ENCODE measurements at regions of chr6 and their contacts with region 1.

Region 1: GRCh38 chr6:16591396-16592222 is 169.7 kb downstream of the ATXN1 start:
- DNase-seq: peak; percentile 72
- H3K4me3 Mint-ChIP-seq: peak overlapping the region; percentile 39
- H3K27ac Mint-ChIP-seq: peak overlapping the region; percentile 78
- H3K4me1 Mint-ChIP-seq: peaks cover 43% of the 10 kb centered on the region
- H3K27me3 Mint-ChIP-seq: no peaks in the 10 kb centered on the region

Region 2: GRCh38 chr6:16533721-16534136 is 57.9 kb before region 1 on chr6:
- CTCF ChIA-PET with region 1: no interaction called
- POLR2A ChIA-PET with region 1: interaction called, 13 read pairs
- intact Hi-C with region 1: loop called (anchors 1 kb)
- DNase-seq: no peak
- H3K4me3 Mint-ChIP-seq: no peak overlapping the region
- H3K27ac Mint-ChIP-seq: peak overlapping the region; percentile 77
- H3K4me1 Mint-ChIP-seq: peaks cover 43% of the 10 kb centered on the region
- H3K27me3 Mint-ChIP-seq: no peaks in the 10 kb centered on the region

Region 3: DNA sequence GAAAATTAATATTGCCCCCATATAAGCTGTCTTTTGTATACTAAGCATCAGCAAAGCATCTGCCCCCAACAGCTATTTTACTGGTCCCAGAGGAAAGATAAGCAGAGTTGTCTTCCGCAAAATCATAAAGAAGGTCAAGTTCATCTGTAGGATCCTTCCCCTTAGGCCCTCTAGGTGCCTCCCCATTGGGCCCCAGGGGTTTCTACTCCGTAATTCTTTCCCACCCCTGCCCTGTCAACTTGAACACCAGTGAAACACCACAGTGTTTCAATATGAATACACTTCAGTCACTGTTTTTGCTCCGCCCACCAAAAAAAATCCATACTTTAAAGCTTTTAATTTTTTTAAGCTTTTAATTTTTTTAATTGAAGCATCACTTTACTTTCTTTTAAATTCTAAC is 10.4 kb after region 1 on chr6:
- CTCF ChIA-PET with region 1: interaction called, 9 read pairs
- POLR2A ChIA-PET with region 1: interaction called, 8 read pairs
- intact Hi-C with region 1: loop called (anchors 1 kb)
- DNase-seq: peak; percentile 83
- H3K4me3 Mint-ChIP-seq: no peak overlapping the region
- H3K27ac Mint-ChIP-seq: peak overlapping the region; percentile 3
- H3K4me1 Mint-ChIP-seq: peaks cover 47% of the 10 kb centered on the region
- H3K27me3 Mint-ChIP-seq: no peaks in the 10 kb centered on the region

Region 4: GRCh38 chr6:16651871-16652270 is 60.3 kb after region 1 on chr6:
- CTCF ChIA-PET with region 1: no interaction called
- POLR2A ChIA-PET with region 1: no interaction called
- intact Hi-C with region 1: loop called (anchors 1 kb)
- DNase-seq: no peak
- H3K4me3 Mint-ChIP-seq: peak overlapping the region; percentile 2
- H3K27ac Mint-ChIP-seq: no peak overlapping the region
- H3K4me1 Mint-ChIP-seq: peaks cover 60% of the 10 kb centered on the region
- H3K27me3 Mint-ChIP-seq: no peaks in the 10 kb centered on the region

Region 5: DNA sequence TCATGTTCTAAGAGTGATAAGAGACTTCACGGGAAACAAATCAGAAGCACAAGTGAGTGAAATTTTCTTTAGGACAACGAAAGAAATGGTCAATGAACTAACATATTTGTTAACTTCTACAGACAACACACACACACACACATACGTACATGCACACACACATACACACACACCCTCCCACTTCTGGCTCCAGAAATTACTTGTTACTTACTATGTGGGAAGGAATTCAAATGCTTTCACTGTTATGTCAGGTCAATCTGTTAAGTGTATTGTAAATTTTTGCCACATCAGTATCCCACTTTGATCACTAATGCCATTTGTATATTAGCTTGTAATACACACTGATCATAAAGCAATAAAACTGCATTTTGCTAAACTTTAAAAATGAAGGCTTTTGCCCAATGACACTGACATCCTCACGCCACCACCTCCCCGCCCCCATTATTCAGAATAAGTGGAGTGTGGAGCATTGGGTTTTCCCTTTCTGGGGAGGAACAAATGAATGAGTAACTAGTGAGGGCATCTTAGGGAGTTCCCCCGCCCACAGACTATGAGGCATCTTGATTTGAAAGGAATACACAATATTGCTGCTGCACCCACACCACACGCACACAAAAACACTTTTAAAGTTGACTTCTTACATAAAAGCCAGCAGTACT is 93.4 kb after region 1 on chr6:
- CTCF ChIA-PET with region 1: no interaction called
- POLR2A ChIA-PET with region 1: interaction called, 5 read pairs
- intact Hi-C with region 1: loop called (anchors 2 kb)
- DNase-seq: peak; percentile 94
- H3K4me3 Mint-ChIP-seq: peak overlapping the region; percentile 52
- H3K27ac Mint-ChIP-seq: peak overlapping the region; percentile 79
- H3K4me1 Mint-ChIP-seq: peaks cover 91% of the 10 kb centered on the region
- H3K27me3 Mint-ChIP-seq: no peaks in the 10 kb centered on the region

Region 6: GRCh38 chr6:16944596-16944995 is 353.0 kb after region 1 on chr6:
- CTCF ChIA-PET with region 1: no interaction called
- POLR2A ChIA-PET with region 1: no interaction called
- intact Hi-C with region 1: no loop called
- DNase-seq: no peak
- H3K4me3 Mint-ChIP-seq: no peak overlapping the region
- H3K27ac Mint-ChIP-seq: no peak overlapping the region
- H3K4me1 Mint-ChIP-seq: peaks cover 13% of the 10 kb centered on the region
- H3K27me3 Mint-ChIP-seq: peaks cover 34% of the 10 kb centered on the region

Region 7: DNA sequence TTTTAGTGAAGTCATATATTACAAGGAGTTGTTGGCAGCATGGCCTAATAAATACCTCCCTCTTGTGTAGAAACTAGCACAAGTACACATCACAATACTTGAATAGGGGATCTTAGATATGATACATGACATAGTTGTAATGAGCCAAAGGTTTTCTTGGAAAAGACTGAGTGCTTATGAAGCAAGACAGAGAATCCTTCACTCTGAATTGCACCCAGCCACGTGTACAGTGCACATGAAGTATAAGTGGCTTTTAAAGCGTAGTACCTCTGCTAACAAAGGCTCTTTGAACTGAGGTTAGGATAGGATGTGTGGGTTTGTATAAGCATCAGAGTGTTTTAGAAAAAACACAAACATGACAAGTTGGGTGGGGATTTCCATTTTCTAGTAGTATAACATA is 364.8 kb after region 1 on chr6:
- CTCF ChIA-PET with region 1: no interaction called
- POLR2A ChIA-PET with region 1: no interaction called
- intact Hi-C with region 1: loop called (anchors 10 kb)
- DNase-seq: peak; percentile 19
- H3K4me3 Mint-ChIP-seq: no peak overlapping the region
- H3K27ac Mint-ChIP-seq: peak overlapping the region; percentile 44
- H3K4me1 Mint-ChIP-seq: peaks cover 32% of the 10 kb centered on the region
- H3K27me3 Mint-ChIP-seq: peaks cover 17% of the 10 kb centered on the region